ENCODE measurements at regions of chr11 and their contacts with region 1.

Region 1: GRCh38 chr11:108697872-108698473 is 33.1 kb downstream of the DDX10 start:
- DNase-seq: peak; percentile 80
- H3K4me3 Mint-ChIP-seq: no peak overlapping the region
- H3K27ac Mint-ChIP-seq: no peak overlapping the region
- H3K4me1 Mint-ChIP-seq: peaks cover 2% of the 10 kb centered on the region
- H3K27me3 Mint-ChIP-seq: no peaks in the 10 kb centered on the region

Region 2: DNA sequence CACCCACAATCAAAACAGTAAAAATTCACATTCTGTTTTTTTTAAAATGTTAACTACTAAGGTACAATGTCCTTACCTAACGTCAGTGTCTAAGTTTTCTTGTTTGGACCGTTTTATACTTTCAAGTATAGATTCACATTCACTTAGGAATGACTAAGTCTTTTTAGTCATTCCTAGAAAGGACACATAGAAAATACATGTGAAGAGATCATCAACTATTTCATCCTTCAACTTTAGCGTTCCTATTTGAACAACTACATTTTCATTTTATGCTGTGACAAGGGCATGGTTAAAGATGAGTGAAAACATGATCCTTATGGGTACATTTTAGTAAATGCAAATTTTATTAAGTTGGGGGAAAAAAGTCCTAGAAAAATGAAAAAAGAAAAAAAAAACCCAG is 29.7 kb after region 1 on chr11:
- intact Hi-C with region 1: loop called (anchors 2 kb)
- DNase-seq: no peak
- H3K4me3 Mint-ChIP-seq: no peak overlapping the region
- H3K27ac Mint-ChIP-seq: peak overlapping the region; percentile 14
- H3K4me1 Mint-ChIP-seq: peaks cover 29% of the 10 kb centered on the region
- H3K27me3 Mint-ChIP-seq: no peaks in the 10 kb centered on the region

Region 3: GRCh38 chr11:108871152-108871551 is 173.2 kb after region 1 on chr11:
- intact Hi-C with region 1: loop called (anchors 2 kb)
- DNase-seq: peak; percentile 77
- H3K4me3 Mint-ChIP-seq: no peak overlapping the region
- H3K27ac Mint-ChIP-seq: no peak overlapping the region
- H3K4me1 Mint-ChIP-seq: peaks cover 12% of the 10 kb centered on the region
- H3K27me3 Mint-ChIP-seq: no peaks in the 10 kb centered on the region

Region 4: GRCh38 chr11:109697140-109697843 is 999.3 kb after region 1 on chr11:
- intact Hi-C with region 1: loop called (anchors 5 kb)
- DNase-seq: peak; percentile 64
- H3K4me3 Mint-ChIP-seq: no peak overlapping the region
- H3K27ac Mint-ChIP-seq: no peak overlapping the region
- H3K4me1 Mint-ChIP-seq: no peaks in the 10 kb centered on the region
- H3K27me3 Mint-ChIP-seq: no peaks in the 10 kb centered on the region

Measured in activated CD4-positive, alpha-beta T cell treated with anti-CD3 and anti-CD28 coated beads, Interleukin-2, amount 10 ng/mL, durations not matched to agents 24 days and 14 days (primary cell).